Dendritic cell treated with granulocyte-macrophage colony-stimulating factor and Interleukin-4, amounts not matched to agents 40 ng/mL and 50 ng/mL, for 4 days (primary cell): ENCODE measurements at regions of chr4 and their contacts with region 1.

Region 1: GRCh38 chr4:13548984-13549546 is 4.8 kb upstream of the NKX3-2 start:
- H3K4me3 Mint-ChIP-seq: peak overlapping the region; percentile 60
- H3K27ac Mint-ChIP-seq: no peak overlapping the region
- H3K4me1 Mint-ChIP-seq: peaks cover 39% of the 10 kb centered on the region
- H3K27me3 Mint-ChIP-seq: peaks cover 89% of the 10 kb centered on the region

Region 2: DNA sequence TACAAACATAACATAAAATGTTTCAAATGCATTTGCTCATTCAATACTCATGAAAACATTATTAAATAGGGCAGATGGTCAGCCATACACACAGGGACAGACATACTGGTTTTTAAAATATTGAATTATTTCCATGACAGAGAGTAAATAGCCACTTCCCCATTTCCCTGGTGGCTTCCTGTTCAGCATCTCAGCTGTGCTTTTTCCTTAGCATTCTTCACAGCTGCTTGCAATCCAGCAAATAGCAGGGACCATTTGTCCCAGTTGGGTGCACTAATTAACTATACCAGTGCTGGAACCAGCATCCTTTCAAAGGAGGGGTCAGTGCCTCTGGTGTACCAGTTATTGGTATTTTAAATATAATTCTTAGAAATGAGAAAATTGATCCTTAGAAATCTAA is 1029.6 kb before region 1 on chr4:
- intact Hi-C with region 1: no loop called
- H3K4me3 Mint-ChIP-seq: no peak overlapping the region
- H3K27ac Mint-ChIP-seq: no peak overlapping the region
- H3K4me1 Mint-ChIP-seq: no peaks in the 10 kb centered on the region
- H3K27me3 Mint-ChIP-seq: no peaks in the 10 kb centered on the region

Region 3: DNA sequence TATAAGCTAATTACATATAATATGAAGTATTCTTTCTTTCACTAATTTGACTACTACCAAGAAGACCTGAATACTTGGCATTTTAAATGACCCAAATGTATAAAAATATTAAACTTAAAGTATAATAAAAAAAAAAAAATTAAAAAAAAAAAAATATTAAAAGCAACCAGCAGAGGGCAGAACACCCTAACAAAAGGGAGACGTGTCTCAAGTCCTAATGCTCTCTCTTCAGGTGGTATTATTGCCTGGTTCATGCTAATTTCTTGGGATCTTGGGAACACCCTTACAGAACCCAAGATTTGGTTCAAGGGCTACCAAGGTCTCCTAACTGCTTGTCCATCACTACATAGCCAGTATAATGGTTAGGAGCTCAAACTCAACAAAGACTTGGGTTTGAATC is 819.7 kb before region 1 on chr4:
- intact Hi-C with region 1: loop called (anchors 1 kb)
- H3K4me3 Mint-ChIP-seq: no peak overlapping the region
- H3K27ac Mint-ChIP-seq: no peak overlapping the region
- H3K4me1 Mint-ChIP-seq: peaks cover 3% of the 10 kb centered on the region
- H3K27me3 Mint-ChIP-seq: peaks cover 3% of the 10 kb centered on the region

Region 4: DNA sequence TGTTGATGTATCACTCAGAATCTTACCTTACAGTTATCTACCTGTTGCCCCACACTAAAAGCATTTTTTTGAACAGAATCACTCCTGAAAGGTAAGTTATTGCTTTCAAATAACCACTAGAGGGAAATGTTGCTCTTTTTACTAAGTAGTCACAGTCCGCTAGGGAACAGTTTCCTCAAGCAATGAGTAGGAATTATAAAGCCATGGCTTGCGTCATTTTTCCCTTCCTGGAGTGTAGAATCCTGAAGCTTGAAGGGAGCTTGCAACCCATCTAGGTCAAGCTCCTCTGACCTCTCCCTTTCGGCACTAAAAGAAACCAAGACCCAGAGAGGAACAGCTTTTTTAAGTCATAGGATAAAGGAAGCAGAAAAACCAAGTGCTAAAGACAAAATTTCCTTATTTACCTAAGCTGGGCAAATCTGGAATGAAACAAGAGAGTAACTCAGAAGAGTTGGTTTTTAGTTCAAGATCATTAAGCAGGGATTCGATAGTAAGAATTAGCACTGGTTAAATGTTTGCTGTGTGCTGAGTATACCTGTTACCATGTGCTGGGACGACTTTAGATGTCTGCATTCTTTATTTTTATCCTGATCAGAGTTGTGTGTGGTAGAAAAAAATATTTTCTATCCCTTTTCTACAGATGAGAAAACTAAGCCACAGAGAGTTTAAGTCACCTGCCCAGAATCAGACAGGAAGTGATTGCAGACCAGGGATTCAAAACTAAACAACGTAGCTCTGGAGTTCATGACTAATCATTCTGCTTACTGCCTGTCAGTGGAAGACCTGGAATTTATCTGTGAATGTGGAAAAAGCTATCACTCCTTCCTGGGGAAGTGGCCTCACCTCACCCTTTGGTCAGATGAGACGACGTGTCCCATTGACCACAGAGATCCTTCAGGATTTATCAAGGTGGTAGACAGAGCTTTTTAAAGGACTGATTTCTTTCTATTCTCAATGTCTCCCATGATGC is 696.4 kb before region 1 on chr4:
- intact Hi-C with region 1: loop called (anchors 2 kb)
- H3K4me3 Mint-ChIP-seq: no peak overlapping the region
- H3K27ac Mint-ChIP-seq: no peak overlapping the region
- H3K4me1 Mint-ChIP-seq: no peaks in the 10 kb centered on the region
- H3K27me3 Mint-ChIP-seq: peaks cover 2% of the 10 kb centered on the region

Region 5: GRCh38 chr4:13484122-13484748 is 64.8 kb before region 1 on chr4 and contains the start of gene RAB28:
- intact Hi-C with region 1: loop called (anchors 2 kb)
- H3K4me3 Mint-ChIP-seq: peak within 1 kb of the TSS; percentile 77
- H3K27ac Mint-ChIP-seq: peak within 1 kb of the TSS; percentile 90
- H3K4me1 Mint-ChIP-seq: peaks cover 24% of the 10 kb centered on the region
- H3K27me3 Mint-ChIP-seq: peaks cover 24% of the 10 kb centered on the region